ENCODE measurements at regions of chr10 and their contacts with region 1.

Region 1: GRCh38 chr10:78211561-78212051 is 177.9 kb downstream of the RPS24 start:
- DNase-seq: no peak
- ATAC-seq: peak; percentile 2

Region 2: DNA sequence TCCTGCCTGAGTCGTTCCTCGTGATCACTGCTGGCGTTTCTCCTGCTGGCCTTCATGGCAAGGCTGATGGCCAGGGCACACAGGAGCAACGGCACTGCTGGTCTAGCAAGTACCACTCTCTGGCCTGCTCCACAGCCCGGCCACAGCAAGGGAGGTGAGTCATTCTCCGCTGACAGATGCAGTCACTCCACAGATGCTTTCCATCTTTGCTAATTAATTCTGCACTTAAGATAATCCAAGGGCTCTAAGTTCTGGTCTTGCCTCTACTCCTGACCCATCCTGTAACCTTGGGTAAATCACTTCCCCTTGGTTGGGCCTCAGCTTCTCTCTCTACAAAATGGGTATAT is 66.4 kb after region 1 on chr10:
- intact Hi-C with region 1: loop called (anchors 5 kb)
- DNase-seq: no peak
- ATAC-seq: peak; percentile 93

Region 3: GRCh38 chr10:78407009-78407711 is 195.6 kb after region 1 on chr10:
- intact Hi-C with region 1: loop called (anchors 5 kb)
- DNase-seq: peak; percentile 81
- ATAC-seq: peak; percentile 61

Region 4: GRCh38 chr10:78579995-78580394 is 368.4 kb after region 1 on chr10:
- intact Hi-C with region 1: loop called (anchors 5 kb)
- DNase-seq: peak; percentile 84
- ATAC-seq: peak; percentile 77

Region 5: DNA sequence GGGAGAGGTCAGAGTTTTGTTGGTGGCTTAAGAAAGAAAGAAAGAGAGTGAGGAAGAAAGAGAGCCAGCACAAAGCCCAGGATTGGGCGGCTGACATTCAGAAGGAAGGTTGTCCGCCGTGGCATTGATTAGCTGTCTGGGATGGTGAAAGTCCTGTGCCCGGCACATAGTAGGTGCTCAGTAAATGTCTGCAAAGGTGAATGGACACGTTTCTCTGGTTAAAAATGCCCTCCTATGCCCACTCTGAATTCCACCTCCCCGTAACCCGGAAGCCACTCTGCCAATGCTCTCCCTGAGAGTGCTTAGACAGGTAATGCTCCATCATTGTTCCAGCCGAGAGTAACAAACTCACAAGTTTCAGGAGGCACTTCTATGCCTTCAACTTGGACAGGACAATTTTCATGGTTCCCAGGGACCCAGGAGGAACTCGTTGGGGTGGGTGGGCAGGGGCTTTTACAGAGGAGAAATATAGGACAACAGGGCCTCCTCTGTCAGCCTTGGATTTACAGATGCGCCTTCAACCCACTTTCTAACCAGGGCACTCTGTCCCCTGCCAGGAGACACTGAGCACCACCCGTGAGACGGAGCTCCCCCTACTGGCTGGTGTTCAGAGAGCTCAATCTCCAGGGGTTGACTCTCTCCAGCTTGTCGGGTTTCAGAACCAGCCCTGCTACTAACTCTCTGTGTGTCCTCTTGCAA is 445.7 kb after region 1 on chr10:
- intact Hi-C with region 1: loop called (anchors 5 kb)
- DNase-seq: peak; percentile 78
- ATAC-seq: peak; percentile 85

Measured in Right ventricle myocardium inferior (tissue), 1 donor.